BJ (cell line): ENCODE measurements at regions of chr17 and their contacts with region 1.

Region 1: DNA sequence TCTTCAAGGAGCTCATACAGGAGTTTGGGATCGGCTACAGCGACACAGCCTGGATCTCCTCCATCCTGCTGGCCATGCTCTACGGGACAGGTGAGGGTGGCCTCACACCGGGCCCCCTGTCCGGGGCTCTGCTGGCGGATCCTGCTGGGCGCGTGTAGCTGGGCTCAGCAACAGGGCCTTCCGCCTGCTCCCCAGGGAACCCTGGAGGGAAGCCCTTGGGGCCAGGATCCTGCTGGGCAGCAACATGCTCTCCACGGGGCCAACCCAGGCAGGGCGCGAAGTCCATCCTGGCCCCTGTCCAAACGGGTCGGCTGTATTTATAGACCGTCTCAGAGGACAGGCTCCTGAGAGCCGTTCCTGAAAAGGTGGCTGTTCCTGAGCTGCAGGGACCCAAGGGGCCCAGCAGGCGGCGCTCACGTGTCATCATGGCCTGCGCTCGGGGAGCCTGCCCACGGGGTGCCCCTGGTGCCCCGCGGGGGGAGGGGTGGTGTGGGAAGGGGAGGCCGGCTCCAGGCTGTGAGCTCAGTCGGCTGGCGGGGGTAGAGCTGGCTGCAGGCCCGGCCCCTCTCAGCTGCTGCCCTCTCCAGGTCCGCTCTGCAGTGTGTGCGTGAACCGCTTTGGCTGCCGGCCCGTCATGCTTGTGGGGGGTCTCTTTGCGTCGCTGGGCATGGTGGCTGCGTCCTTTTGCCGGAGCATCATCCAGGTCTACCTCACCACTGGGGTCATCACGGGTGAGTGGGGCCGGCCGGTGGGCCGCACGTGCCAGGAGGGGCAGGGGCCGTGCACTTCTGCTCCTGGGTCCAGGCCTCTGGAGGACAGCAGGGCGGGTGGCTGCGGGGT is 7.5 kb downstream of the SLC16A3 start:
- DNase-seq: no peak
- H3K4me3 ChIP-seq: no peak overlapping the region
- H3K27me3 ChIP-seq: no peaks in the 10 kb centered on the region
- CTCF ChIP-seq: peak; percentile 76

Region 2: DNA sequence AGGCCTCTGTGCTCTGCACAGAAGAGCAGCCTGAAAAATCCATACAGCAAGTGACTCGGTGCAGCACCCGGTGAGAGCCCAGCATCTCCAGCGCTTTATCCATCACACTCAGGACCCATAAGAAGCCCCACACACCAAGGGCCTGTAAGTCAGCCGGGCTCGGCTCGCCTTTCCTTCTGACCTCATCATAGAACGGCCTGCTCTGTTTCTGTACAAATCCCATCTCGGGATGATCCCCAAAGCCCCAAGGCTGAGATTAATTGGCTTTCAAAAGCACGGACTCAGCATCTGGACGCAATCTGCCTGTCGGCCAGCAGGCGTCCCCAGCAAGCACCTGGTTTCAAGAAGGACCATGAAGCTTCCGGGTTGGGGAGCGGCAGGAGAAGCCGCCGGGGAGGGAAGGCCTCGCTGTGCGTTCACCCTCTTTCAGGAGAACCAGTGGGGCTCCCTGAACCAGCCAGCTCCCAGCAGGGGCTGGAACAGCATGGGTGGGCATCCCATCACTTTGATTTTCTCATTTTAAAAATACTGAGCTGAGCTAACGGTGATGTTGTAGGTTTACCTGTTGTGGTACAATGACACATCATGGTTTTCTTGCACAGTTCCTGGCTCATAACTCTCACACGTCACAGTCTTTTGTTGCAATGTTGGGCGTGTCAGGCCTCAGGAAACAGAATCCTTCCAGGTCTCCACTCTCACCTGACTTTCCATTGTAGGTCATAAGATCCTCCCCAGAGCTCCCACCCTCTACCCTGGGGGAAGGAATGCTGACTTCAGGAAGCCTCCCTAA is 30.4 kb before region 1 on chr17:
- CTCF ChIA-PET with region 1: interaction called, 52 read pairs
- POLR2A ChIA-PET with region 1: no interaction called
- DNase-seq: peak; percentile 47
- H3K4me3 ChIP-seq: no peak overlapping the region
- H3K27me3 ChIP-seq: no peaks in the 10 kb centered on the region
- CTCF ChIP-seq: peak; percentile 96

Region 3: GRCh38 chr17:82212331-82213250 is 23.8 kb before region 1 on chr17 and contains the start of gene CCDC57:
- CTCF ChIA-PET with region 1: interaction called, 15 read pairs
- POLR2A ChIA-PET with region 1: no interaction called
- DNase-seq: no peak
- H3K4me3 ChIP-seq: peak within 1 kb of the TSS; percentile 85
- H3K27me3 ChIP-seq: no peaks in the 10 kb centered on the region
- CTCF ChIP-seq: no peak
- polyA plus RNA-seq, gene CCDC57: 11.6 and 15.4 TPM in 2 replicates

Region 4: DNA sequence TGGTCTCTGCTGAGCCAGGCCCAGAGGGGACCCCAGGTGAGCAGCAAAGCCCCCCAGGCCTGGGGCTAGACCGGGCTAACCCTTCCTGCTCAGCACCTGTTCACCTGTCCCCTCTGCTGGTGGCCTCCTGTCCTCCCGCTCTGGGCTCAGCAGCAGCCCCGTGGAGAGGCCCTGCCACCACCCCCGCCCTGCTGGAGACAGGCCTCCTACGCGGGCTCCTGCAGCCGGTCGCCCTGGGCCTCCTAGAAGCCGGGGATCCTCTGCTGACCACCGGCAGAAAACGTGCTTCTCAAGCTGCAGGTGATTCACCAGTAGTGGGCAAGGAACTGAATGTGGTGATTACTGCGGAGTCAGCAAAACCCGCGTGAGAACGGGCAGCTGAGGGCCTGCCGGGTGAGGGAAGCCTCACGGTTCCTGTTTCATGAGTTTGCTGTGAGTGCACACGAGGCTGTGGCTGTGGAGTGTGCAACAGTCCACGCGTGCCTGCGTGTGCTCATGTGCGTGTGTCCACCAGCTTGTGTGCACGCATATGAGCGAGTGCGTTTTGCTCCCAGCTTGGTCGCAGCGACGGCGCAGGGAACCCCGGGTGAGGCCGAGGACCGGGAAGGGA is 96.4 kb after region 1 on chr17:
- CTCF ChIA-PET with region 1: no interaction called
- POLR2A ChIA-PET with region 1: no interaction called
- DNase-seq: no peak
- H3K4me3 ChIP-seq: peak overlapping the region; percentile 64
- H3K27me3 ChIP-seq: 0 out of 2 replicates have a peak, but pooled peaks cover 1% of the 10 kb centered on the region
- CTCF ChIP-seq: no peak